Activated CD8-positive, alpha-beta memory T cell treated with anti-CD3 and anti-CD28 coated beads, Interleukin-2, amount 10 ng/mL, durations not matched to agents 7 days and 5 days (primary cell): ENCODE measurements at regions of chr12 and their contacts with region 1.

Region 1: GRCh38 chr12:53746592-53747092 is 5.1 kb downstream of the CISTR start:
- DNase-seq: peak; percentile 92
- ATAC-seq: peak; percentile 79
- H3K4me3 Mint-ChIP-seq: no peak overlapping the region
- H3K27ac Mint-ChIP-seq: no peak overlapping the region
- H3K4me1 Mint-ChIP-seq: peaks cover 16% of the 10 kb centered on the region
- H3K27me3 Mint-ChIP-seq: peaks cover 39% of the 10 kb centered on the region

Region 2: GRCh38 chr12:53414756-53415417 is 331.8 kb before region 1 on chr12:
- CTCF ChIA-PET with region 1: no interaction called
- DNase-seq: no peak
- ATAC-seq: no peak
- H3K4me3 Mint-ChIP-seq: no peak overlapping the region
- H3K27ac Mint-ChIP-seq: no peak overlapping the region
- H3K4me1 Mint-ChIP-seq: peaks cover 23% of the 10 kb centered on the region
- H3K27me3 Mint-ChIP-seq: no peaks in the 10 kb centered on the region

Region 3: DNA sequence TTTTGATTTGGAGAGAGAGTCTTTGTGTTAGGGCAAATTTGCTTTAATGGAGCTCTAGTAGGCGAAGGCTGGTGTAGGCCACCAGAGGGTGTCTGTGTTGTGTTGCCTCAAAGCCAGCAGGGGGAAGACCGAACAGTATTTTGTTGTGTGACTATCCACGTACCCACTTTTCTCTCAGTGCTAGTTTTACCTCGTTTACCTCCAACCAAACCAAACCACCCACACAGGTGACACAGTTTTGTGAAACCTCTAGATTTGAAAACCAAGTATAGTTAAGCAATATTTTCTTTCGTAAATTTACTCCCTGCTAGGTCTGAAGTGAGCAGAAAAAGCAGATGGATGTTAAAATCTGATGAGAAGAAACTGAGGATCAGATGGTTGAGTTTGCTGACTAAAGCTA is 203.1 kb before region 1 on chr12:
- CTCF ChIA-PET with region 1: interaction called, 19 read pairs
- DNase-seq: peak; percentile 70
- ATAC-seq: peak; percentile 98
- H3K4me3 Mint-ChIP-seq: no peak overlapping the region
- H3K27ac Mint-ChIP-seq: peak overlapping the region; percentile 63
- H3K4me1 Mint-ChIP-seq: peaks cover 11% of the 10 kb centered on the region
- H3K27me3 Mint-ChIP-seq: no peaks in the 10 kb centered on the region

Region 4: DNA sequence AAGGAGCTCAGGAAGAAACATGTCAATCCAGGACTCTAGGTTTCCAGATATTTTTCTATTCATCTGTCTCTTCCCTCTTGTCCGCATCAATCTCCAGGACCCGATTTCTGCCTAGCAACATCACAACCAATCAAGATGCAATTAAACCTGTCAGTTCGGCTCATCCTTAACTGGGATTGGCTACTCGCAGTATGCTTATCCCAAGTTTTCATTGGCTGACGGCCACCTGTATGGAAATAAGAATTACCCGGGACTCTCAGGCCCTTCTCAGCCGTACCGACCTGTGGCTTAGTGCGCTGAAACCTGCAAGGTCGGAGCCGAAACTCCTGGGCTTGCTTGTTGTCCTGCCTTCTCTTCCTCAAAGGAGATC is 50.4 kb before region 1 on chr12:
- CTCF ChIA-PET with region 1: interaction called, 176 read pairs
- DNase-seq: no peak
- ATAC-seq: peak; percentile 55
- H3K4me3 Mint-ChIP-seq: no peak overlapping the region
- H3K27ac Mint-ChIP-seq: no peak overlapping the region
- H3K4me1 Mint-ChIP-seq: peaks cover 26% of the 10 kb centered on the region
- H3K27me3 Mint-ChIP-seq: peaks cover 78% of the 10 kb centered on the region

Region 5: GRCh38 chr12:53701518-53702260 is 45.0 kb before region 1 on chr12:
- CTCF ChIA-PET with region 1: interaction called, 239 read pairs
- DNase-seq: peak; percentile 81
- ATAC-seq: peak; percentile 90
- H3K4me3 Mint-ChIP-seq: no peak overlapping the region
- H3K27ac Mint-ChIP-seq: no peak overlapping the region
- H3K4me1 Mint-ChIP-seq: peaks cover 4% of the 10 kb centered on the region
- H3K27me3 Mint-ChIP-seq: peaks cover 91% of the 10 kb centered on the region

Region 6: GRCh38 chr12:53717319-53717718 is 29.3 kb before region 1 on chr12:
- CTCF ChIA-PET with region 1: interaction called, 270 read pairs
- DNase-seq: no peak
- ATAC-seq: no peak
- H3K4me3 Mint-ChIP-seq: no peak overlapping the region
- H3K27ac Mint-ChIP-seq: no peak overlapping the region
- H3K4me1 Mint-ChIP-seq: no peaks in the 10 kb centered on the region
- H3K27me3 Mint-ChIP-seq: no peaks in the 10 kb centered on the region

Region 7: DNA sequence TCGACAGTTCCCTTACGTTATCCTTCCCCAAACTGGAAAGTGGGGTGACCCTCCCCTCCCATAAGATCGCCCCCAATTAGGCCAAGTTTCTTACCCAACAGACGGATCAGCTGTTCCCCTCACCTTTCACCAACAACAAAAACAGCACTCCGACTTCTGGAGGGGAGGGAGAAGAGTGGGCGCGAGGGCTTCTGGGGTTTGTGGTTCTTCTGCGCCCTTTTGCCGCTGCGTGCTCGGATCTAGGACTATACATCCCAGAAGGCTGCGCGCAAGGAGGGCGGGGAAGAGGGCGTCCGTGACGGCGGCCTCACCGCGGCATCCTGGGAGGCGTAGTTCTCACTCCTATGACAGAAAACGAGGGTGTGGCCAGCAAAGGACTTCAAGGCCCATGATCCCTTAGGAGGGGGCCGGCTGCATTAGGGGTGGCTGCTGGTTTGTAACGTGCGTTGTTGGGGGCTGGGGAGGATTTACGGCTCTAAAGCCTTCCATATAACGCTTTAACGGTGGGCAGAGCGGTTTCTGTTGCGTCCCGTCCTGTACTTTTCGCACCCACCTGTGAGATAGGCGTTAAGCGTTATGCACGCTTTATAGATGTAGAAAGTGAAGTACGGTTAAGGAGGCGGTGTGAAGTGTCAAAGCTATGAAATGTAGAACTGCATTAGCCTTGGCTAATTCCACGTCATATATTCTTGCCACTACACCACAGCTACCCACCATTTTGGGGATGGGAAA is 19.2 kb before region 1 on chr12 and contains the start of gene CALCOCO1:
- CTCF ChIA-PET with region 1: interaction called, 270 read pairs
- DNase-seq: peak; percentile 99
- ATAC-seq: peak; percentile 98
- H3K4me3 Mint-ChIP-seq: peak within 1 kb of the TSS; percentile 87
- H3K27ac Mint-ChIP-seq: peak within 1 kb of the TSS; percentile 90
- H3K4me1 Mint-ChIP-seq: peaks cover 26% of the 10 kb centered on the region
- H3K27me3 Mint-ChIP-seq: peaks cover 2% of the 10 kb centered on the region
- total RNA-seq, gene CALCOCO1: 39.0 to 40.0 TPM

Region 8: DNA sequence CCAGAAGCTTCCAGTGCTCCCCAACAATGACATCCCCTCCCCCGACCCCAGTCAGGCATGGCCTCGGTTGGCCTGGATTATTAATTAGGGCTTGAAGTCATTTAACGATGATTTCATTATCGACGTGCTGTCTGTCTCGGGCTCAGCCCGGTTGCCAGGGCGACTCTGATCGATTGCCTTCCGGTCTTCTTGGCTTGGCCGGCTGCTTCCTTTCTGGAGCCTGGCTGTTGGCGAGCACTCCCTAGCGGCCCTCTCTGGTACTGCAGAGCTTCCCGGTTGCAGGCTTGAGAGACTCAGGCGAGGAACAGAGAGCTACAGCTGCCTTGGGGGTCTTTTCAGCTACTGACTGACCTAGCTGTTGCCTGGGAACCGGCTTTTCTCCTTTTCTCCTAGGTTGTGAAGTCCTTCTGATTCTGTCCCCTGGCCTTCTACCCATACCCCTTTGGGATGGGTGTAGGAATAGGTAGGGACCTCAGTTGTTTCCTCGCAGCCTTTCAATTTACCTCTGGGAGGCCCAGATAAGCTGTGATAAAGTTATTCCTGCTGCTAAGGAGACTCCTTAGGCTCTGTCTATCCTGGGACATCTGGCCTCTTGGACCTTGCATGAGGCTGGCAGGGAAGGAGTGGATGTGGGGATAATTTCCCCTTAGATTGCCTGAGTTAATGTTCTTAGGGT is 10.6 kb after region 1 on chr12:
- CTCF ChIA-PET with region 1: interaction called, 165 read pairs
- DNase-seq: peak; percentile 92
- ATAC-seq: peak; percentile 93
- H3K4me3 Mint-ChIP-seq: peak overlapping the region; percentile 52
- H3K27ac Mint-ChIP-seq: peak overlapping the region; percentile 70
- H3K4me1 Mint-ChIP-seq: peaks cover 19% of the 10 kb centered on the region
- H3K27me3 Mint-ChIP-seq: peaks cover 40% of the 10 kb centered on the region